ENCODE measurements at regions of chr1 and their contacts with region 1.

Region 1: GRCh38 chr1:110605901-110606656 is at the start of gene KCNA2:
- DNase-seq: peak; percentile 15
- H3K4me3 Mint-ChIP-seq: peak within 1 kb of the TSS; percentile 68
- H3K27ac Mint-ChIP-seq: no peak within 1 kb of the TSS
- H3K4me1 Mint-ChIP-seq: peaks cover 41% of the 10 kb centered on the region
- H3K27me3 Mint-ChIP-seq: peaks cover 43% of the 10 kb centered on the region
- total RNA-seq, gene KCNA2: 5.9 to 6.6 TPM

Region 2: DNA sequence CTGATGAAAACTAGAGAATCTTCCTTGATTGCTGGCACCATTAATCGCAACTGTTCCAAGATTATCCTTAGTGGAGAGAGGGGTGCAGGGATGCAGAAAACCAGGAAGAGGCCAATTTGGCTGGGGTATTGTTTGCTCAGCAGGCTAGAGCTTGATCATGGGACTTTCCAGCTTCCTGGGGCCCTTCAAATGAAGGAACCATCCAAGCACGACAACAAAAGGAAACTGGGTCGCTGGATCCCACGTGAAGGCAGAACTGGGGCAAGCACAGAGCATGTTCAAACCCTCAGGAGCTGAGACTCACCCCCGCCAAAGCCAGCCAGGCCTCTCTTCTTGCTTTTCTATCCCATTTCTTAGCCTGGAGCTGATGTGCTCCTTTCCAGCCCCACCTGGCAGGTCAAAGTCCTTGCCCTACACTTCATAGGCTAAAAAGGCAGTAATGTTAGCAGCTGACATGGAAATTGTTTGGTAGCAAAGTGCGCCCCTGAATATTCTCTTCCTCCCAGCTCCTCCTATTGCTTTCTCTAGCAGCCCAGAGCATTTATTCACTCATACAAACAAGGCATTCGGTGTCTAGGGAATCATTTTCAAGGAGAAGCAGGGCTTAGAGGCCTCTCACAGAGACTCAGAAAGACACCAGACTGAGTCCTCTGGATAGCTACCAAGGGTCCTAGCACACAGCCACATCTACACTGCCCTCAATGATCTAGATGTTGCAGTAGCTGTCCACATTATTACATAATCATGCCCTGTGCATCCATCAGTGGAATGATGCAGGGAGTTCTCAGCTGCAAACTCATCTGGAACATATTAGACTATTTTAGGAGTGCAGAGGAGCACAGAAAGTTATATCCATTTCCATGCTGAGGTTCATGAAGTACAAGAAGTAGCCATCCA is 11.4 kb before region 1 on chr1:
- CTCF ChIA-PET with region 1: interaction called, 17 read pairs
- POLR2A ChIA-PET with region 1: interaction called, 13 read pairs
- DNase-seq: no peak
- H3K4me3 Mint-ChIP-seq: no peak overlapping the region
- H3K27ac Mint-ChIP-seq: no peak overlapping the region
- H3K4me1 Mint-ChIP-seq: peaks cover 32% of the 10 kb centered on the region
- H3K27me3 Mint-ChIP-seq: peaks cover 2% of the 10 kb centered on the region